ENCODE measurements at regions of chr12 and their contacts with region 1.

Region 1: DNA sequence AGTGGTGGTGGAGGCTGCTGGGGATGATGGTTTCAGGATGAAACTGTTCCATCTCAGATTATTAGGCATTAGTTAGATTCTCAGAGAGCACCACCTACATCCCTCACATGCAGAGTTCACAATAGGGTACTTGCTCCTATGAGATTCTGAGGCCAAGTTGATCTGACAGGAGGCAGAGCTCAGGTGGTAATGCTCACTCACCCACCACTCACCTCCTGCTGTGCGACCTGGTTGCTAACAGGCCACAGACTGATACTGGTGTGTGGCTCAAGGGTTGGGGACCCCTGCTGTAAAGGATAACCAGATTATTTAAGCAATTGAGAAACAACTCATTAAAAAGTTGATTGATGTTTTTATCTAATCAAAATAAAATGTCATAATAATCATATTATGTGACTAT is 248.5 kb downstream of the RERGL start:
- DNase-seq: no peak
- H3K4me3 ChIP-seq: no peak overlapping the region
- H3K4me3 Mint-ChIP-seq: no peak overlapping the region
- H3K27ac Mint-ChIP-seq: no peak overlapping the region
- H3K4me1 ChIP-seq: no peaks in the 10 kb centered on the region
- H3K4me1 Mint-ChIP-seq: no peaks in the 10 kb centered on the region
- H3K27me3 ChIP-seq: no peaks in the 10 kb centered on the region
- H3K27me3 Mint-ChIP-seq: no peaks in the 10 kb centered on the region
- CTCF ChIP-seq: no peak

Region 2: DNA sequence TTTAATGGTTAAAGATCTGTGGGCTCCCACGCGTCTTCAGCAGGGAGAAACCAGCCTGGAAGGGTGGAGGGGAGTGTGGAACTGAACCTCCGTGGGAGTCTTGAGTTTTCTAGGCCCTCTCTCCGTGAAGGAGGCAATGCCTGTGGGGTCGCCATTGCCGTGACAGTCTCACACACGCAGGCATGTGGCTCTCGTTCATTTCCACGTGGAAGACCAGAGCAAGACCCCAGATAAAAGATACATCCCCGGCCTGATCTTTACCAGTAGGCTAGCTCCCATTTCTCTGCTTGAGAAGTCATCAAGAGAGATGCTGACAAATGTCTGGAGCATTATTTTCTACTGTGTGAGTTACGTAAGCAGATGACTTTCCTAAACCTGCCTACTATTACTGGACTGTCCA is 743.8 kb before region 1 on chr12:
- CTCF ChIA-PET with region 1: no interaction called
- POLR2A ChIA-PET with region 1: no interaction called
- intact Hi-C with region 1: no loop called
- DNase-seq: no peak
- H3K4me3 ChIP-seq: no peak overlapping the region
- H3K4me3 Mint-ChIP-seq: no peak overlapping the region
- H3K27ac Mint-ChIP-seq: no peak overlapping the region
- H3K4me1 ChIP-seq: no peaks in the 10 kb centered on the region
- H3K4me1 Mint-ChIP-seq: no peaks in the 10 kb centered on the region
- H3K27me3 ChIP-seq: no peaks in the 10 kb centered on the region
- H3K27me3 Mint-ChIP-seq: peaks cover 14% of the 10 kb centered on the region
- CTCF ChIP-seq: no peak

Region 3: GRCh38 chr12:17763366-17763765 is 78.1 kb before region 1 on chr12:
- CTCF ChIA-PET with region 1: no interaction called
- POLR2A ChIA-PET with region 1: no interaction called
- intact Hi-C with region 1: loop called (anchors 5 kb)
- DNase-seq: no peak
- H3K4me3 ChIP-seq: no peak overlapping the region
- H3K4me3 Mint-ChIP-seq: no peak overlapping the region
- H3K27ac Mint-ChIP-seq: no peak overlapping the region
- H3K4me1 ChIP-seq: no peaks in the 10 kb centered on the region
- H3K4me1 Mint-ChIP-seq: no peaks in the 10 kb centered on the region
- H3K27me3 ChIP-seq: no peaks in the 10 kb centered on the region
- H3K27me3 Mint-ChIP-seq: peaks cover 3% of the 10 kb centered on the region
- CTCF ChIP-seq: no peak

Measured in Caco-2 (cell line).